ENCODE measurements at regions of chr4 and their contacts with region 1.

Region 1: DNA sequence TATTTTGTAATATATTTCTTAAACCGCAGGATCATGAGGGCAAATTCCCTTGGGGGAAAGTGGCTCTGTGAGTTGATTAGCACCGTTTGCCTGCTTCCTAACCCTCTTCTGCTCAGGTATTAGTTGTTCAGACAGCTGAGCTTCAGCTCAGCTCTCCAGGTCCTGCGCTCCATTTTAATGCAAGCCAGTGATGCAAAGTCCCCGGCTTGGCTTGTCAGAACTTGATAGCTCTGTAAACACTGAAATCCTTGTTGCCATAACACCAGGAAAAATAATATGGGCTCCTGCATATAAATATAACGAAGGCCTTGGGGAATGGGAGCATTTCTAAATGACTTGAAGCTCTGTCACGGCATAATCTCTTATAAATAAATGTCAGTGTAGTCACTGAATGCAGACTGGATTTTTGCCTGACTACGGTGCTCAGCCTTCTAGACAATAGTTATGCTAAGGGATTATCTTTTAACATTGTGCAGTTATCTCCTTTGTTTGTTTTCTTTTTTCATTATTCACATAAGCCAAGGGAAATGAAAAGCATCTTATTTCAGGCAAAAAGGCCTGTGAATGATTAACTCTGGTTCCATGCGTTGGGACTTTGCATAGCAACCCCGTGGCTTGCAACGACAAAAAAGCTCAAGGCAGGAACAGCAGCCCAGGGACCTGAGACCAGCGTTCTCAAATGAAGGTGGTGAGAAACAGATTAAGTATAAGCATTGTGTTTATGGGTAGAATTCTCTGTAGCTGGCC is 253.2 kb downstream of the SPRY1 start:
- DNase-seq: no peak
- H3K4me3 ChIP-seq: no peak overlapping the region
- H3K27ac ChIP-seq: peak overlapping the region in 2 of 3 donors; percentile 13 to 60
- H3K4me1 ChIP-seq: no peaks in the 10 kb centered on the region
- H3K27me3 ChIP-seq: no peaks in the 10 kb centered on the region
- CTCF ChIP-seq: no peak
- POLR2A ChIP-seq: no peak

Region 2: DNA sequence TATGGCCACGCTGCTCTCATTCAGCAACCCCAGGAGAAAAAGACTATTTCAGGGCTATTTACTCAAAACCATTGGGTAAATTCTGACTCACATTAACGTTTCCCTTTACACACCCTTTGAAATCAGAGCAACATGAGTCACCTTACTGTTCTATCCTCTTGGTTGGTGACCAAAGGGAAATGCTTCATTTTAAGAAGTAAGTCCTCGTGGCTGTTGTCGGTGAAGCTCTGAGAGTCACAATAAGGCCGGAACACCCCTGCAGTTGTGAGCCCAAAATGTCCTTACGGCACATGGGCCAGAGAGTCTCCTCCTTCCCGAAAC is 309.5 kb before region 1 on chr4:
- intact Hi-C with region 1: loop called (anchors 10 kb)
- DNase-seq: no peak
- H3K4me3 ChIP-seq: no peak overlapping the region
- H3K27ac ChIP-seq: peak overlapping the region in 1 of 3 donors; percentile 49
- H3K4me1 ChIP-seq: no peaks in the 10 kb centered on the region
- H3K27me3 ChIP-seq: no peaks in the 10 kb centered on the region
- CTCF ChIP-seq: no peak
- POLR2A ChIP-seq: no peak